Naive thymus-derived CD4-positive, alpha-beta T cell (primary cell): ENCODE measurements at regions of chrX and their contacts with region 1.

Region 1: GRCh38 chrX:68732906-68733493 is 85.5 kb downstream of the STARD8 start:
- DNase-seq: peak; percentile 21 to 69 (median 50)
- ATAC-seq: peak; percentile 78
- H3K4me3 ChIP-seq: no peak overlapping the region
- H3K4me3 Mint-ChIP-seq: no peak overlapping the region
- H3K27ac ChIP-seq: no peak overlapping the region
- H3K27ac Mint-ChIP-seq: no peak overlapping the region
- H3K4me1 ChIP-seq: no peaks in the 10 kb centered on the region
- H3K4me1 Mint-ChIP-seq: peaks cover 0 to 2% (median 0%) of the 10 kb centered on the region in 7 donors
- H3K27me3 ChIP-seq: no peaks in the 10 kb centered on the region
- H3K27me3 Mint-ChIP-seq: peaks cover 0 to 14% (median 9%) of the 10 kb centered on the region in 5 donors

Region 2: DNA sequence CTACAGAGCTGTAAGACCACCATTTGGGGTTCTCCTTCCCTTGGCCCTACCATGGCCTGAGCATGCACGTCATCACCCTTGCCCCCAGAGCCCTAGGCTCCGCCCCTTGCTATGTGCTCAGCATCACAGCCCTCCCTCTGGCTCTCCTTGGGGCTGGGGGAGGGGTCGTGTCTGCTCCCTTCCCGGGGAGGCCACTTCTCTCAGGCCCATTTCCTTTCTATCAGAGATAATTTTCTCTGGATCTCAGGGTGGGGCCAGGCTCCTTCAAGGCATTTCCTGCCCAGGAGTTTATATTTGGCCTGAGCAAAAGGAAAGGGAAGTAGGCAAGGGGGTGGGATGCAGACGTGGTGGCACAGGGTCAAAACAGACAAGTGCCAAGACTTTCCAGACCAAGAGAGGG is 29.6 kb before region 1 on chrX:
- CTCF ChIA-PET with region 1: no interaction called
- POLR2A ChIA-PET with region 1: no interaction called
- intact Hi-C with region 1: no loop called
- DNase-seq: no peak
- ATAC-seq: no peak
- H3K4me3 ChIP-seq: no peak overlapping the region
- H3K4me3 Mint-ChIP-seq: no peak overlapping the region
- H3K27ac ChIP-seq: no peak overlapping the region
- H3K27ac Mint-ChIP-seq: no peak overlapping the region
- H3K4me1 ChIP-seq: no peaks in the 10 kb centered on the region
- H3K4me1 Mint-ChIP-seq: peaks cover 0 to 19% (median 0%) of the 10 kb centered on the region in 7 donors
- H3K27me3 ChIP-seq: no peaks in the 10 kb centered on the region
- H3K27me3 Mint-ChIP-seq: no peaks in the 10 kb centered on the region

Region 3: GRCh38 chrX:68807818-68808217 is 74.8 kb after region 1 on chrX:
- CTCF ChIA-PET with region 1: no interaction called
- POLR2A ChIA-PET with region 1: no interaction called
- intact Hi-C with region 1: loop called in 1 of 2 experiments (anchors 5 kb)
- DNase-seq: no peak
- ATAC-seq: no peak
- H3K4me3 ChIP-seq: no peak overlapping the region
- H3K4me3 Mint-ChIP-seq: no peak overlapping the region
- H3K27ac ChIP-seq: no peak overlapping the region
- H3K27ac Mint-ChIP-seq: no peak overlapping the region
- H3K4me1 ChIP-seq: no peaks in the 10 kb centered on the region
- H3K4me1 Mint-ChIP-seq: no peaks in the 10 kb centered on the region
- H3K27me3 ChIP-seq: no peaks in the 10 kb centered on the region
- H3K27me3 Mint-ChIP-seq: peaks cover 6 to 15% (median 12%) of the 10 kb centered on the region in 5 donors

Region 4: DNA sequence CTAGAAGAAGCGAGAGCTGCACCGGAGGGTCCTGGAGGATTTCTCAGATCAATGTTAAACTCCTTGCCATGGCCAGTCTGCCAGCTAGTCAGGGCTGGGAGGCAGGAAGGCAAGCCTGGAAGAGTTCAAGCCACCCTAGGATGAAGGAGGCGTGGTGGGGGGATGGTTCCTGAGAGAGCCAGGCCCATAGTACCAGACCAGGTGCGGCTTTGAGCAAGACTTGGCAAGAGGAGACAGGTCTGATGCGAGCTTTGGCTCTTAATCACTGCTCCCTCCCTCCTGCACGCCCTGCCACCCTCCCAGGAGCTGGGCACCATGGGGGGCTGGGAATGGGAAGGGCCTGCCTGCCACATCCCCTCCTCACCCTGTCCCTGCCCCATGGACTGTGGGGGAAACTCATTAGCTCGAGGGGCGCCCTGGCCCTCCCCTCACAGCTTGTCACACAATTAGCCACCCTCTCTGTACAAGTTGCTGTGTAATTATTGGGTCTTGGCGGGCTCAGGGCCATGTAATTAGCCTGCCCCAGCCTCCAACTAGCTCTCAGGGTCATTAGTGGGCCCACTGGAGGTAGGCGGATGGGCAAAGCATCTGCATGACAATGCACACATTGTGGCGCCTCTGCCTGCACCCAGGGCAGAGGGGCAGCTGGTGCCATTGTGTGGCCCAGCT is 146.1 kb after region 1 on chrX:
- CTCF ChIA-PET with region 1: no interaction called
- POLR2A ChIA-PET with region 1: no interaction called
- intact Hi-C with region 1: no loop called
- DNase-seq: no peak
- ATAC-seq: no peak
- H3K4me3 ChIP-seq: no peak overlapping the region
- H3K4me3 Mint-ChIP-seq: no peak overlapping the region
- H3K27ac ChIP-seq: no peak overlapping the region
- H3K27ac Mint-ChIP-seq: no peak overlapping the region
- H3K4me1 ChIP-seq: no peaks in the 10 kb centered on the region
- H3K4me1 Mint-ChIP-seq: no peaks in the 10 kb centered on the region
- H3K27me3 ChIP-seq: no peaks in the 10 kb centered on the region
- H3K27me3 Mint-ChIP-seq: no peaks in the 10 kb centered on the region

Region 5: DNA sequence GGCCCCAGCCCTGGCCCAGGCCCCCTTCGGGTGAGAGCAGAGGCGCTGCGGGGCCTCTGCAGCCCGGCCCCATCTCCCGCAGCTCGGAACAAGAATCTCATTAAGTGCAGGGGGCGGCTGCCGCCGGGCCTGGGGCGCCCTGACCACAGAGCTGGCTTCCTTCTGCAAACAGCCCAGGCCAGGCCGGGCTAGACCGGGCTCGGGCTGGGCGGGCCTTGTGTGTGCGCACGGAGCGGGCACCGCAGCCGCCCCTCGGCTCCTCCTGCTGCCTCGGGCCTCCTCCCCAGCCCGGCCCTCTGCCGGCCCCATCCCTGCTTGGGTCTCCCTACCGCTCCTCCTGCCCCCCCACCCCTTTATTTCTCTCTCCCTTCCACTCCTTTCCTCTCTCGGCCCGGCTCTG is 179.1 kb after region 1 on chrX:
- CTCF ChIA-PET with region 1: no interaction called
- POLR2A ChIA-PET with region 1: no interaction called
- intact Hi-C with region 1: no loop called
- DNase-seq: no peak
- ATAC-seq: no peak
- H3K4me3 ChIP-seq: no peak overlapping the region
- H3K4me3 Mint-ChIP-seq: no peak overlapping the region
- H3K27ac ChIP-seq: no peak overlapping the region
- H3K27ac Mint-ChIP-seq: no peak overlapping the region
- H3K4me1 ChIP-seq: no peaks in the 10 kb centered on the region
- H3K4me1 Mint-ChIP-seq: peaks cover 0 to 7% (median 0%) of the 10 kb centered on the region in 7 donors
- H3K27me3 ChIP-seq: no peaks in the 10 kb centered on the region
- H3K27me3 Mint-ChIP-seq: peaks cover 0 to 11% (median 1%) of the 10 kb centered on the region in 5 donors

Region 6: GRCh38 chrX:69387567-69388487 is 654.8 kb after region 1 on chrX:
- CTCF ChIA-PET with region 1: no interaction called
- POLR2A ChIA-PET with region 1: no interaction called
- intact Hi-C with region 1: loop called in 1 of 2 experiments (anchors 5 kb)
- DNase-seq: peak in 7 of 9 donors; percentile 0 to 27 (median 11)
- ATAC-seq: peak; percentile 45
- H3K4me3 ChIP-seq: no peak overlapping the region
- H3K4me3 Mint-ChIP-seq: no peak overlapping the region
- H3K27ac ChIP-seq: no peak overlapping the region
- H3K27ac Mint-ChIP-seq: no peak overlapping the region
- H3K4me1 ChIP-seq: no peaks in the 10 kb centered on the region
- H3K4me1 Mint-ChIP-seq: peaks cover 0 to 4% (median 0%) of the 10 kb centered on the region in 7 donors
- H3K27me3 ChIP-seq: no peaks in the 10 kb centered on the region
- H3K27me3 Mint-ChIP-seq: peaks cover 0 to 20% (median 4%) of the 10 kb centered on the region in 5 donors